B cell (primary cell): ENCODE measurements at regions of chr7 and their contacts with region 1.

Region 1: DNA sequence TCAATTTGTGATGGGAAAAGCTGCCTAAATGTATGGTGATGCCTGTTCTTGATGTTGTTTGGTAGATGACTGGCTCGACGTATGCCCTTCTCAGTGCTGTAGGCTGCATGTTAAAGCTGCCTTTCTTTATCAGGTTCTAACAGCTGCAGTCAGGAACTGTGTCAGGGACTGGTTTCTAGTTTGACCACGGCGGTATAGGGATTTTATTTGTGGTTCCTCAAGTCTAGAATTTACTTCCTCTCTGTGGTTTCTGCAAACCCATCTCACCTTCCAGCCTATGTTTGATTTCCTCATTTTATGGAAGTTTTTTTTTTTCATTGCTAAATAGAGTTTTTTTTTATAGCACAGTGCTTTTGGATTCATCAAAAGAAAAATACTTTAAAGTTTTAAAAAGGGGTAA is 26.5 kb downstream of the LMTK2 start:
- DNase-seq: peak; percentile 85
- ATAC-seq: peak; percentile 80
- H3K4me3 ChIP-seq: peak overlapping the region in 1 of 5 experiments; percentile 5
- H3K4me3 Mint-ChIP-seq: peak overlapping the region; percentile 75
- H3K27ac ChIP-seq: no peak overlapping the region
- H3K27ac Mint-ChIP-seq: no peak overlapping the region
- H3K4me1 ChIP-seq: peaks cover 69 to 81% of the 10 kb centered on the region in 2 donors
- H3K4me1 Mint-ChIP-seq: peaks cover 63% of the 10 kb centered on the region
- H3K27me3 ChIP-seq: peaks cover 0 to 74% (median 52%) of the 10 kb centered on the region in 4 experiments
- H3K27me3 Mint-ChIP-seq: peaks cover 57% of the 10 kb centered on the region
- CTCF ChIP-seq: no peak

Region 2: GRCh38 chr7:98021588-98022351 is 111.4 kb before region 1 on chr7:
- CTCF ChIA-PET with region 1: interaction called, 15 read pairs
- POLR2A ChIA-PET with region 1: no interaction called
- intact Hi-C with region 1: no loop called
- DNase-seq: peak; percentile 81
- ATAC-seq: peak; percentile 75
- H3K4me3 ChIP-seq: no peak overlapping the region
- H3K4me3 Mint-ChIP-seq: no peak overlapping the region
- H3K27ac ChIP-seq: no peak overlapping the region
- H3K27ac Mint-ChIP-seq: peak overlapping the region; percentile 34
- H3K4me1 ChIP-seq: no peaks in the 10 kb centered on the region
- H3K4me1 Mint-ChIP-seq: peaks cover 4% of the 10 kb centered on the region
- H3K27me3 ChIP-seq: peaks cover 0 to 25% (median 1%) of the 10 kb centered on the region in 4 experiments
- H3K27me3 Mint-ChIP-seq: peaks cover 23% of the 10 kb centered on the region
- CTCF ChIP-seq: peak; percentile 90

Region 3: DNA sequence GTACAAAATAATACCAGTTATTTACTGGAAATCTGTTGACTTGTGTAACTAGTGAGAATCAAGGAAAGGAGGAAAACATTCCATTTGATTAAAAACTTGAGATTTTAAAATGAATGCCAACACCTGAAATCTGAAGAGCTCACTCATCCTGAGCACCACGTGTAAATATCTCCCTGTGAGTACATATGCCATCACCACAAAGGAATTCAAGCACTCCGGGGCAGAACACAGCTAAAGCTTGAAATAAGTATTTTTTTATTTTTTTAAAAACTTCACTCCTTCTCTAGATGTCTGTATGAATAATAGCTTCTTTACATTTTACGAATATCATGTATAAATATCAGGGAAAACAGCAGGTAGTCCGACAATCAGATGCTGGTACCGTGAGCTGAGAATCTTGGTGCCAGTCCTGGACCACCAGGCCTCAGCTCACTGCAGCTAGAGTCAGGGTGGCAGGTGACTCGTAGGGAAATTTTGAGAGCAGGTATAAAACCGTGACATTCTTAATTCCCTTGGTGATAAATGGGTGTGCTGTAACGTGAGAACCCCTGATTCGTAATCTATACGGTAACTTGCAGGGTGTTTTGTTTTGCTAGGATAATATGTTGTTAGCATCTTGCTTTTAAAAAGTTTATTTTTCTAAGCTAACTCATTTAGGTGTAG is 13.8 kb before region 1 on chr7:
- CTCF ChIA-PET with region 1: interaction called, 4 read pairs
- POLR2A ChIA-PET with region 1: no interaction called
- intact Hi-C with region 1: loop called (anchors 2 kb)
- DNase-seq: no peak
- ATAC-seq: no peak
- H3K4me3 ChIP-seq: no peak overlapping the region
- H3K4me3 Mint-ChIP-seq: no peak overlapping the region
- H3K27ac ChIP-seq: no peak overlapping the region
- H3K27ac Mint-ChIP-seq: no peak overlapping the region
- H3K4me1 ChIP-seq: no peaks in the 10 kb centered on the region
- H3K4me1 Mint-ChIP-seq: peaks cover 2% of the 10 kb centered on the region
- H3K27me3 ChIP-seq: peaks cover 0 to 11% (median 3%) of the 10 kb centered on the region in 4 experiments
- H3K27me3 Mint-ChIP-seq: peaks cover 31% of the 10 kb centered on the region
- CTCF ChIP-seq: no peak

Region 4: GRCh38 chr7:98755128-98755898 is 622.1 kb after region 1 on chr7:
- CTCF ChIA-PET with region 1: no interaction called
- POLR2A ChIA-PET with region 1: no interaction called
- intact Hi-C with region 1: no loop called
- DNase-seq: no peak
- ATAC-seq: no peak
- H3K4me3 ChIP-seq: no peak overlapping the region
- H3K4me3 Mint-ChIP-seq: no peak overlapping the region
- H3K27ac ChIP-seq: no peak overlapping the region
- H3K27ac Mint-ChIP-seq: no peak overlapping the region
- H3K4me1 ChIP-seq: no peaks in the 10 kb centered on the region
- H3K4me1 Mint-ChIP-seq: no peaks in the 10 kb centered on the region
- H3K27me3 ChIP-seq: peaks cover 0 to 6% (median 0%) of the 10 kb centered on the region in 4 experiments
- H3K27me3 Mint-ChIP-seq: peaks cover 22% of the 10 kb centered on the region
- CTCF ChIP-seq: no peak